Calu3 (cell line): ENCODE measurements at regions of chr7 and their contacts with region 1.

Region 1: GRCh38 chr7:88169717-88170320 is 50.0 kb downstream of the SRI start:
- DNase-seq: no peak
- H3K4me3 Mint-ChIP-seq: no peak overlapping the region
- H3K27ac Mint-ChIP-seq: no peak overlapping the region
- H3K4me1 Mint-ChIP-seq: peaks cover 9% of the 10 kb centered on the region
- H3K27me3 Mint-ChIP-seq: no peaks in the 10 kb centered on the region
- CTCF ChIP-seq: no peak

Region 2: GRCh38 chr7:87797798-87798403 is 371.9 kb before region 1 on chr7:
- CTCF ChIA-PET with region 1: no interaction called
- intact Hi-C with region 1: loop called (anchors 5 kb)
- DNase-seq: peak; percentile 14
- H3K4me3 Mint-ChIP-seq: no peak overlapping the region
- H3K27ac Mint-ChIP-seq: no peak overlapping the region
- H3K4me1 Mint-ChIP-seq: no peaks in the 10 kb centered on the region
- H3K27me3 Mint-ChIP-seq: no peaks in the 10 kb centered on the region
- CTCF ChIP-seq: no peak